Activated CD4-positive, alpha-beta memory T cell treated with anti-CD3 and anti-CD28 coated beads for 36 hours (primary cell): ENCODE measurements at regions of chr12 and their contacts with region 1.

Region 1: GRCh38 chr12:131104463-131105350 is 151.0 kb downstream of the ADGRD1 start:
- DNase-seq: peak; percentile 88
- H3K4me3 Mint-ChIP-seq: peak overlapping the region; percentile 10
- H3K27ac Mint-ChIP-seq: no peak overlapping the region
- H3K4me1 Mint-ChIP-seq: peaks cover 14% of the 10 kb centered on the region
- H3K27me3 Mint-ChIP-seq: peaks cover 7% of the 10 kb centered on the region

Region 2: GRCh38 chr12:130606231-130606630 is 498.5 kb before region 1 on chr12:
- CTCF ChIA-PET with region 1: no interaction called
- POLR2A ChIA-PET with region 1: no interaction called
- intact Hi-C with region 1: no loop called
- DNase-seq: no peak
- H3K4me3 Mint-ChIP-seq: no peak overlapping the region
- H3K27ac Mint-ChIP-seq: no peak overlapping the region
- H3K4me1 Mint-ChIP-seq: no peaks in the 10 kb centered on the region
- H3K27me3 Mint-ChIP-seq: no peaks in the 10 kb centered on the region

Region 3: DNA sequence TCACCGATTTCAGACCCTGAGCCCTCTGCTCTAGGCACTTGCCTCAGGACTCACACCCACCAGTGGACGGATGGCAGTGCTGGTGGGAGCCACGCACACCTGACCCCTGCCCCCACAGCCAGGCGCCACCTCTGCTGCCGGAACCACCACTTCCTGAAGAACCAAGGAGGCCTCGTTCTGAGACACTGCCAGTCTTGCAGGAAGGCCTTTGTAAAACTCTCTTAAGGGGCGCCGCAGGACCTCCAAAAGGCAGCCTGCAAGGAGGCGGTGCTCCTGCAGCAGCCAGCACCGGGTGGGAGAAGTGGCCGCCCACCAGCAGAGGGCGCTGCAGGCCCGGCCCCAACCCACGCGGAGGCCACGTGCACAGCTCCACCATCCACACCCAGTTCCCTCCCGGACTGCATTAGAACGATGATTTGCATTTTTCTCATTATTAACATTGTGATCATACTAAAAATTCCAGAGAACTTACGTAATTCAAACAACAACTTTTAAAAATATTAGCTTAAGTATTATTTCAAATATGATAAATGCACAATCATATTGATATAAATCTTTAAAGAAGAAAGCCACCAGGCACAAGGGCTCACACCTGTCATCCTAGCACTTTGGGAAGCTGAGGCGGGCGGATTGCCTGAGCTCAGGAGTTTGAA is 278.4 kb before region 1 on chr12:
- CTCF ChIA-PET with region 1: interaction called, 13 read pairs
- POLR2A ChIA-PET with region 1: no interaction called
- intact Hi-C with region 1: no loop called
- DNase-seq: peak; percentile 82
- H3K4me3 Mint-ChIP-seq: no peak overlapping the region
- H3K27ac Mint-ChIP-seq: no peak overlapping the region
- H3K4me1 Mint-ChIP-seq: peaks cover 13% of the 10 kb centered on the region
- H3K27me3 Mint-ChIP-seq: no peaks in the 10 kb centered on the region

Region 4: DNA sequence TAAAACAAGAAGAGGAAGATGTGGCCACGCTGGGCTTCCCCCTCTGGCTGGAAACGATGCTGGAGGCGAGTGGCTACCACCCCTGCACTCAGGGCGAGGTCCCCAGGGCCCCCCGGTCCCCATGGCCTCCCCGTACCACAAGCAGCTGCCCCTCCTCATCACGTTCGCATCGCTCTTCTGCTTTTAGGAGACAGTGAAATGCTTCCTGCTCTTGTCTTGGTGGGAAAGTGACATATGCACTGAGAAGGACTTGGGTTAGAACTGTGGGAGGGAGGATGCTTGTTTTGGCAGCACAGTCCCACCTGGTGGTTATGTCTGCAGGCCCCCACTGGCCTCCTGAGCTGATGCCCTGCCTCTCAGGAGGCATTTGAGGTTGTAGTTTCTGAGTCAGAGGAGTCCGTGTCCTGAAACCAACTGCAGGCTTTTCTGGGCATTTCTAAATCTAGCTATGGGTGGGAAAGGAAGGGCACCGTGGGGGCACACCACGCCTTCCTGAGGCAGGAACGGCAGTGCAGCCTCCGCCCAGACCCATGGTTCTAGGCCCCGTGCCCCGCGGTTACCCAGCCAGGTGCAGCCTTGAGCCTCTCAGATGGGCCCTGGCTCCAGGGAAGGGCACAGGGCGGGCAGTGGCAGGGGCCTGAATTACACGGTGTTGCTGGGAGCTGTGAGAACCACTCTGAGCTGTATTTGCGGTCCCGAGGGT is 11.7 kb before region 1 on chr12:
- CTCF ChIA-PET with region 1: interaction called, 14 read pairs
- POLR2A ChIA-PET with region 1: interaction called, 3 read pairs
- intact Hi-C with region 1: no loop called
- DNase-seq: peak; percentile 39
- H3K4me3 Mint-ChIP-seq: no peak overlapping the region
- H3K27ac Mint-ChIP-seq: no peak overlapping the region
- H3K4me1 Mint-ChIP-seq: peaks cover 18% of the 10 kb centered on the region
- H3K27me3 Mint-ChIP-seq: peaks cover 5% of the 10 kb centered on the region

Region 5: GRCh38 chr12:131132118-131132892 is 27.6 kb after region 1 on chr12:
- CTCF ChIA-PET with region 1: interaction called, 197 read pairs
- POLR2A ChIA-PET with region 1: interaction called, 3 read pairs
- intact Hi-C with region 1: loop called (anchors 1 kb)
- DNase-seq: peak; percentile 80
- H3K4me3 Mint-ChIP-seq: no peak overlapping the region
- H3K27ac Mint-ChIP-seq: no peak overlapping the region
- H3K4me1 Mint-ChIP-seq: no peaks in the 10 kb centered on the region
- H3K27me3 Mint-ChIP-seq: peaks cover 2% of the 10 kb centered on the region

Region 6: GRCh38 chr12:131454418-131455217 is 349.9 kb after region 1 on chr12:
- CTCF ChIA-PET with region 1: interaction called, 13 read pairs
- POLR2A ChIA-PET with region 1: no interaction called
- intact Hi-C with region 1: loop called (anchors 10 kb)
- DNase-seq: peak; percentile 56
- H3K4me3 Mint-ChIP-seq: no peak overlapping the region
- H3K27ac Mint-ChIP-seq: no peak overlapping the region
- H3K4me1 Mint-ChIP-seq: no peaks in the 10 kb centered on the region
- H3K27me3 Mint-ChIP-seq: peaks cover 13% of the 10 kb centered on the region

Region 7: GRCh38 chr12:131830335-131830913 is 725.7 kb after region 1 on chr12:
- CTCF ChIA-PET with region 1: interaction called, 10 read pairs
- POLR2A ChIA-PET with region 1: no interaction called
- intact Hi-C with region 1: loop called (anchors 2 kb)
- DNase-seq: peak; percentile 68
- H3K4me3 Mint-ChIP-seq: no peak overlapping the region
- H3K27ac Mint-ChIP-seq: no peak overlapping the region
- H3K4me1 Mint-ChIP-seq: peaks cover 11% of the 10 kb centered on the region
- H3K27me3 Mint-ChIP-seq: peaks cover 52% of the 10 kb centered on the region